Pancreas (tissue), 10 donors: ENCODE measurements at regions of chr3 and their contacts with region 1.

Region 1: GRCh38 chr3:27312044-27312668 is 57.0 kb downstream of the NEK10 start:
- DNase-seq: peak in 1 of 6 donors; percentile 15
- ATAC-seq: peak; percentile 61 to 91 (median 86)
- H3K4me3 ChIP-seq: no peak overlapping the region
- H3K27ac ChIP-seq: no peak overlapping the region
- H3K4me1 ChIP-seq: no peaks in the 10 kb centered on the region
- H3K27me3 ChIP-seq: no peaks in the 10 kb centered on the region
- CTCF ChIP-seq: peak; percentile 49 to 79 (median 58)

Region 2: GRCh38 chr3:27467545-27467944 is 155.4 kb after region 1 on chr3:
- intact Hi-C with region 1: loop called in 1 of 3 experiments (anchors 10 kb)
- DNase-seq: no peak
- ATAC-seq: peak; percentile 60 to 90 (median 89)
- H3K4me3 ChIP-seq: no peak overlapping the region
- H3K27ac ChIP-seq: no peak overlapping the region
- H3K4me1 ChIP-seq: peaks cover 0 to 6% (median 5%) of the 10 kb centered on the region in 3 donors
- H3K27me3 ChIP-seq: no peaks in the 10 kb centered on the region
- CTCF ChIP-seq: peak in 3 of 4 donors; percentile 26 to 37 (median 31)

Region 3: GRCh38 chr3:27681245-27681748 is 369.1 kb after region 1 on chr3:
- intact Hi-C with region 1: loop called in 1 of 3 experiments (anchors 10 kb)
- DNase-seq: peak in 1 of 6 donors; percentile 26
- ATAC-seq: peak; percentile 86 to 92 (median 90)
- H3K4me3 ChIP-seq: no peak overlapping the region
- H3K27ac ChIP-seq: no peak overlapping the region
- H3K4me1 ChIP-seq: peaks cover 0 to 4% (median 0%) of the 10 kb centered on the region in 3 donors
- H3K27me3 ChIP-seq: no peaks in the 10 kb centered on the region
- CTCF ChIP-seq: peak in 3 of 4 donors; percentile 26 to 54 (median 38)